Right cardiac atrium (tissue), 5 donors: ENCODE measurements at regions of chr5 and their contacts with region 1.

Region 1: DNA sequence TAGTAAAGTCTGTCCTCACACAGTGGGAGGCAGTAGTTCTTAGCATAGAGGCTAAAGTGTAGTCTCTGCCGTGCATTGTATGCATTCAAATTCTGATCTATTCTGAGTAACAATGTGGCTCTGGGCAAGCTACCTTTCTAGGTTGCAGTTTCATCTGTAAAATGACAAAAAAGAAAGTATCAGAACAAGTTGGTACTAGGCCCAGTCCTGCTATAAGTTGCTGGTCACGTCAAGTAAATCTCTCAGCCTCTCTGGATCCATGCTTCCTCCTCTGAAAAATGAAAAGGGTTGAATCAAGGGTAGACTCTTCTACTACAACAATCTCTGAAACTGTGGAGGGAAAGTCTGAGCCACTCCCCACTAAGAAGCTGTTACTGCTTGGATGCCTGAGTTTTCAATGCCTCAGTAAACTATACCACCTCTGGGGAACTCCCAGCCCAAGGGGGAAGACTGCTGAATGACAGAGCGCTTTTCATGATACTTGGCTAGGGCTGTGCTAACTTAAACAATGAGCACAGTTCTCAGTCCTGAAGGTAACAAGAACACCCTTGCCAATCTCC is 34.5 kb upstream of the SPARC start:
- DNase-seq: no peak
- ATAC-seq: no peak
- H3K4me3 ChIP-seq: no peak overlapping the region
- H3K27ac ChIP-seq: no peak overlapping the region
- H3K4me1 ChIP-seq: peaks cover 12% of the 10 kb centered on the region
- H3K27me3 ChIP-seq: no peaks in the 10 kb centered on the region

Region 2: GRCh38 chr5:151659001-151659754 is 62.0 kb before region 1 on chr5:
- intact Hi-C with region 1: loop called in 1 of 4 experiments (anchors 5 kb)
- DNase-seq: peak; percentile 85 to 95 (median 90)
- ATAC-seq: peak; percentile 84 to 86
- H3K4me3 ChIP-seq: no peak overlapping the region
- H3K27ac ChIP-seq: no peak overlapping the region
- H3K4me1 ChIP-seq: peaks cover 4% of the 10 kb centered on the region
- H3K27me3 ChIP-seq: no peaks in the 10 kb centered on the region

Region 3: GRCh38 chr5:152004095-152004494 is 282.9 kb after region 1 on chr5:
- intact Hi-C with region 1: no loop called
- DNase-seq: peak in 1 of 3 donors; percentile 28
- ATAC-seq: no peak
- H3K4me3 ChIP-seq: no peak overlapping the region
- H3K27ac ChIP-seq: no peak overlapping the region
- H3K4me1 ChIP-seq: no peaks in the 10 kb centered on the region
- H3K27me3 ChIP-seq: no peaks in the 10 kb centered on the region